ENCODE measurements at regions of chr1 and their contacts with region 1.

Region 1: GRCh38 chr1:160342953-160343869 is at the starts of genes COPA and NCSTN:
- DNase-seq: peak; percentile 97
- ATAC-seq: peak; percentile 91
- H3K4me3 ChIP-seq: peak within 1 kb of the TSS; percentile 90 to 100 (median 98)
- H3K4me3 Mint-ChIP-seq: peak within 1 kb of the TSS; percentile 99
- H3K27ac ChIP-seq: peak within 1 kb of the TSS; percentile 89 to 95
- H3K27ac Mint-ChIP-seq: peak within 1 kb of the TSS; percentile 99
- H3K4me1 ChIP-seq: peaks cover 46 to 54% of the 10 kb centered on the region in 2 donors
- H3K4me1 Mint-ChIP-seq: peaks cover 71% of the 10 kb centered on the region
- H3K27me3 ChIP-seq: no peaks in the 10 kb centered on the region
- H3K27me3 Mint-ChIP-seq: no peaks in the 10 kb centered on the region
- CTCF ChIP-seq: no peak
- total RNA-seq, gene COPA: 168 and 180 TPM in 2 replicates
- total RNA-seq, gene NCSTN: 95.1 and 110 TPM in 2 replicates

Region 2: DNA sequence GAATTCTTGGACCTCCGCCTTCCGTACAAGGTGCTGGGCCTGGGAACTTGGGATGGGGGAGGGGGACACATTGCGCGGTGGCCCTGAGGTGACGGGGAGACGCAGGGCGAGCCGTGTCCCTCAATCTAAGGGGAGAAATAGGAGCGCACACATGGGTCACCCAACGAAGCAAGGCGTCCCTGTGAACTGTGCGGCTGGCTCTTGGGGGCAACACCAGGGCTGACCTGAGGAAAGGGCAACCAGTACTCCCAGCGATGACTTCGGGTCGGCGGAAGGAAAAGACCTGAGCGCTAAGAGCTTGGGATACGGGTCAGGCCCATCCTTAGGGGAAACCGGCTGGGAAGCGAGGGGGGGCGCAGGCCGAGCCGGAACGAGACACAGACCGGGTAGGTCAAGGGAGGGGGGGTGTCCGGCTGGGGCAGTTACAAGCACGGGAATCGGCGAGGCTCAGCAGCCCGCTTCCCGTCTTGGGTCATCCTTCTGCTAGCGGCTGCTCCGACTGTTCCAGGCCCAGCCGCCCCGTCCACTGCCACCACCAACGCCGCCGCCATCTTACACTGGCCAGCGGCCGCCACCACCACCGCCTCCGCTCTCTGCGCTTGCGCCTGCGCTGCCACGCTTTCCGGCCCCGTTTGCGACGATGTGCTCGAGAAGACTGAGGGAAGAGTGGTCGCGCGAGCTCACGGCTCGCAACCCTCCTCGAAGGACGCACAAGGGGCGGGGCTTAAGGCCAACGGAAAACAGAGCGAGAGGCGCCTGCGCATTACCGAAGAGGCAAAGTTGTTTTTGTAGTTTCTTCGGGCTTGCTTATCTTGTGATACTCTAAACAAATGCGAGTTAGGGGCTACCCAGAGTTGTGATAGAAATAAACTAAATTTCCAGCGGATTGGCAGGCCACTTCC is 81.1 kb before region 1 on chr1 and contains the start of gene DCAF8:
- CTCF ChIA-PET with region 1: no interaction called
- POLR2A ChIA-PET with region 1: interaction called, 5 read pairs
- intact Hi-C with region 1: loop called (anchors 1 kb)
- DNase-seq: peak; percentile 98
- ATAC-seq: peak; percentile 92
- H3K4me3 ChIP-seq: peak within 1 kb of the TSS; percentile 96 to 100 (median 99)
- H3K4me3 Mint-ChIP-seq: peak within 1 kb of the TSS; percentile 100
- H3K27ac ChIP-seq: peak within 1 kb of the TSS; percentile 96 to 97
- H3K27ac Mint-ChIP-seq: peak within 1 kb of the TSS; percentile 92
- H3K4me1 ChIP-seq: peaks cover 20 to 22% of the 10 kb centered on the region in 2 donors
- H3K4me1 Mint-ChIP-seq: peaks cover 41% of the 10 kb centered on the region
- H3K27me3 ChIP-seq: no peaks in the 10 kb centered on the region
- H3K27me3 Mint-ChIP-seq: no peaks in the 10 kb centered on the region
- CTCF ChIP-seq: no peak
- total RNA-seq, gene DCAF8: 247 and 266 TPM in 2 replicates

Region 3: DNA sequence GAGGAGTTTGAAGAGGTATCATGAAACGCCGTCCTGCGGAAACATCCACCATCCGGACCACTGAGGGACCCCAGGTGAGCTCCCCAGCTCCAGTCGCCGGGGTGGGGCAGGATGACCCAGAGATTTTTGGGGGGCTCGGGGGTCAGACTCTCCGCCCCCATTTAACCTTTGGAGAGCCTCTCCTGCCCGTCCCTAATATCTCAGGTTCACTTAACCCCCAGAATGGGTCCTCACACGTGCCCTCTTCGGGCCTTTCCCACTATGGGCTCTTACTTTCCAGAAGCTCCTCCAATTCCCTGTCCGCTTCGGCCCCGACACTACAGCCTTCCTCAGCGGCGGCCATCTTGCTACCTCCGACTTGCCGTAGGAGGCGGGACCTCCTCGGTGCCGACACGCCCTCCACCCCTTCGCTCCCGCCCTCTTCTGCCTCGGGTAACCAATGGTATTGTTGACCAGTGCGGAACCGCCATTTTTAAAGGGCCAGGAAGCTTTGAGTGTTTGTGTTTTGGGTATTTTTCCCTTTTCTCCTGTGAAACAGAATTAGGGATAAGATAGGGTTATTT is 58.3 kb before region 1 on chr1 and contains the start of gene PEX19:
- CTCF ChIA-PET with region 1: no interaction called
- POLR2A ChIA-PET with region 1: no interaction called
- intact Hi-C with region 1: loop called (anchors 2 kb)
- DNase-seq: peak; percentile 94
- ATAC-seq: peak; percentile 100
- H3K4me3 ChIP-seq: peak within 1 kb of the TSS; percentile 60 to 88 (median 78)
- H3K4me3 Mint-ChIP-seq: peak within 1 kb of the TSS; percentile 97
- H3K27ac ChIP-seq: peak within 1 kb of the TSS; percentile 26 to 75
- H3K27ac Mint-ChIP-seq: peak within 1 kb of the TSS; percentile 96
- H3K4me1 ChIP-seq: peaks cover 9 to 21% of the 10 kb centered on the region in 2 donors
- H3K4me1 Mint-ChIP-seq: peaks cover 21% of the 10 kb centered on the region
- H3K27me3 ChIP-seq: no peaks in the 10 kb centered on the region
- H3K27me3 Mint-ChIP-seq: no peaks in the 10 kb centered on the region
- CTCF ChIP-seq: no peak
- total RNA-seq, gene PEX19: 56.0 and 58.4 TPM in 2 replicates

Region 4: DNA sequence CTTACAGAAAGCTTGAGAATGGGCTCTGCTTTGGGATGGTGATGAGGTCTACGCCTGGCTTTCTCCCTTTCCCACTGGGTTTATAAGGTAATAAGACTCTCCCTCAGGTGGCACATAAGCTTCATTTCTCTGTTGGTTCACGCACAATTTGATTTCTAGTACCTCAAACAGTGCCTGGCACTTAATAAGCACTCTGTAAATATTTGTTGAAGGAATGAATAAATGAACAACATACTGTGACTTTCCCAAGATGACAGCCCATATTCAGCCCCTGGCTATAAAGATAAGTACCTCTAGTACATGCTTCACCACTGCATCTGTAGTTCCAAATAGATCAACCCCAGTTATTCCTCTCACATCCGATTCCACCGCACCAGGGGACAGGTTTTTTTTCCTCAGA is 18.0 kb before region 1 on chr1:
- CTCF ChIA-PET with region 1: no interaction called
- POLR2A ChIA-PET with region 1: no interaction called
- intact Hi-C with region 1: no loop called
- DNase-seq: no peak
- ATAC-seq: no peak
- H3K4me3 ChIP-seq: no peak overlapping the region
- H3K4me3 Mint-ChIP-seq: no peak overlapping the region
- H3K27ac ChIP-seq: no peak overlapping the region
- H3K27ac Mint-ChIP-seq: peak overlapping the region; percentile 23
- H3K4me1 ChIP-seq: no peaks in the 10 kb centered on the region
- H3K4me1 Mint-ChIP-seq: peaks cover 4% of the 10 kb centered on the region
- H3K27me3 ChIP-seq: no peaks in the 10 kb centered on the region
- H3K27me3 Mint-ChIP-seq: no peaks in the 10 kb centered on the region
- CTCF ChIP-seq: no peak

Region 5: GRCh38 chr1:160437432-160438316 is 94.5 kb after region 1 on chr1:
- CTCF ChIA-PET with region 1: no interaction called
- POLR2A ChIA-PET with region 1: no interaction called
- intact Hi-C with region 1: loop called (anchors 10 kb)
- DNase-seq: peak; percentile 73
- ATAC-seq: peak; percentile 86
- H3K4me3 ChIP-seq: peak overlapping the region; percentile 5 to 56 (median 36)
- H3K4me3 Mint-ChIP-seq: peak overlapping the region; percentile 89
- H3K27ac ChIP-seq: peak overlapping the region; percentile 72 to 92
- H3K27ac Mint-ChIP-seq: peak overlapping the region; percentile 98
- H3K4me1 ChIP-seq: peaks cover 38 to 40% of the 10 kb centered on the region in 2 donors
- H3K4me1 Mint-ChIP-seq: peaks cover 66% of the 10 kb centered on the region
- H3K27me3 ChIP-seq: no peaks in the 10 kb centered on the region
- H3K27me3 Mint-ChIP-seq: no peaks in the 10 kb centered on the region
- CTCF ChIP-seq: no peak

Region 6: GRCh38 chr1:160795951-160796383 is 452.8 kb after region 1 on chr1 and contains the start of gene LY9:
- CTCF ChIA-PET with region 1: no interaction called
- POLR2A ChIA-PET with region 1: no interaction called
- intact Hi-C with region 1: loop called (anchors 10 kb)
- DNase-seq: peak; percentile 96
- ATAC-seq: peak; percentile 93
- H3K4me3 ChIP-seq: peak within 1 kb of the TSS; percentile 41 to 87 (median 63)
- H3K4me3 Mint-ChIP-seq: peak within 1 kb of the TSS; percentile 99
- H3K27ac ChIP-seq: peak within 1 kb of the TSS; percentile 95 to 98
- H3K27ac Mint-ChIP-seq: peak within 1 kb of the TSS; percentile 98
- H3K4me1 ChIP-seq: peaks cover 62 to 68% of the 10 kb centered on the region in 2 donors
- H3K4me1 Mint-ChIP-seq: peaks cover 68% of the 10 kb centered on the region
- H3K27me3 ChIP-seq: no peaks in the 10 kb centered on the region
- H3K27me3 Mint-ChIP-seq: no peaks in the 10 kb centered on the region
- CTCF ChIP-seq: no peak
- total RNA-seq, gene LY9: 365 and 367 TPM in 2 replicates

Region 7: GRCh38 chr1:161159087-161159912 is 816.1 kb after region 1 on chr1 and contains the start of gene USP21:
- CTCF ChIA-PET with region 1: no interaction called
- POLR2A ChIA-PET with region 1: no interaction called
- intact Hi-C with region 1: loop called (anchors 10 kb)
- DNase-seq: peak; percentile 94
- ATAC-seq: peak; percentile 96
- H3K4me3 ChIP-seq: peak within 1 kb of the TSS; percentile 69 to 92 (median 85)
- H3K4me3 Mint-ChIP-seq: peak within 1 kb of the TSS; percentile 92
- H3K27ac ChIP-seq: peak within 1 kb of the TSS; percentile 74 to 76
- H3K27ac Mint-ChIP-seq: peak within 1 kb of the TSS; percentile 93
- H3K4me1 ChIP-seq: peaks cover 31 to 33% of the 10 kb centered on the region in 2 donors
- H3K4me1 Mint-ChIP-seq: peaks cover 55% of the 10 kb centered on the region
- H3K27me3 ChIP-seq: no peaks in the 10 kb centered on the region
- H3K27me3 Mint-ChIP-seq: no peaks in the 10 kb centered on the region
- CTCF ChIP-seq: no peak
- total RNA-seq, gene USP21: 50.2 and 53.3 TPM in 2 replicates